ENCODE measurements at regions of chr1 and their contacts with region 1.

Region 1: DNA sequence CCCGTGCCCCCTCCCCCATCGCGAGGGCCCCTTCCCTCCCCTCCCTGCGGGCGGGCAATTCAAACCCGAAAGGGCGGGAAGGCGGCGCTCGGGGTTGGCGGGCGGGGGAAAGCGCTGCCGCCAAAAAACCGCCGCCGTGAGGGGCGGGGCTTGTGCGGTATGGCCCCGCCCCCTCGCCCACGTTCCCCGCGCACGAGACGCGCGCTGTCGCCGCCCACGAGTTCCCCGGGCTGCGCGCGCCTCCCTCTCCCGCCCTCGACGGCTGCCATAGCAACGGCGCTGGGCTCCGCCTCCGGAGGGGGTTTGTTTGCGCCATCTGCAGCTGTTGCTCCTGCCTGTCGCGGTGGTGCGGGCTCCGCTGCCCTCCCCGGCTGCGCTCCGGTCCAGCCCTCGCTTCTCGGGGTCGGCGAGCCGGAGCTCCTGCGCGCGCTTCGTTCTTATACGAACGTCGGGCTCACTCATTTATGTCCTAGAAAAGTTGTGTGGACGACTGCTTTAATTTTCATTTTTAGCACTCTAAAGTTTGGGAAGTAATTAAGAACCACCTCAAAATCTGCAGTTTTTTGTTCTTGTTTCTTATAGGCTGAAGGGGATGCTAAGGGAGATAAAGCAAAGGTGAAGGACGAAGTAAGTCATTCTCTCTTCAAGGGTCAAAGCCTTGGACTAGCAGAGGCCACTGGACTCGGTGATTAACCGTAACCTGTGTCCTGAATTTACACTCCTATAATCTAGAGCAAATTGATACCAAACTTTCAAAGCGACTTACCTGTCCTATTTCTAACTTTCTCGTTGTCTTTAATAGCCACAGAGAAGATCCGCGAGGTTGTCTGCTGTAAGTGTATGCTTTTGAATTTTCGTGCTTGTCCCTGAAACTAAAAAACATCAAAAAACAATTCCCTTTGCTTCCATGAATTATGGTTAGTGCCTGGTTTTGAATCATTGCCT is 933 bp downstream of the HMGN2 start:
- DNase-seq: peak; percentile 97
- H3K4me3 Mint-ChIP-seq: peak overlapping the region; percentile 89
- H3K27ac Mint-ChIP-seq: peak overlapping the region; percentile 74
- H3K4me1 Mint-ChIP-seq: peaks cover 50% of the 10 kb centered on the region
- H3K27me3 Mint-ChIP-seq: no peaks in the 10 kb centered on the region

Region 2: DNA sequence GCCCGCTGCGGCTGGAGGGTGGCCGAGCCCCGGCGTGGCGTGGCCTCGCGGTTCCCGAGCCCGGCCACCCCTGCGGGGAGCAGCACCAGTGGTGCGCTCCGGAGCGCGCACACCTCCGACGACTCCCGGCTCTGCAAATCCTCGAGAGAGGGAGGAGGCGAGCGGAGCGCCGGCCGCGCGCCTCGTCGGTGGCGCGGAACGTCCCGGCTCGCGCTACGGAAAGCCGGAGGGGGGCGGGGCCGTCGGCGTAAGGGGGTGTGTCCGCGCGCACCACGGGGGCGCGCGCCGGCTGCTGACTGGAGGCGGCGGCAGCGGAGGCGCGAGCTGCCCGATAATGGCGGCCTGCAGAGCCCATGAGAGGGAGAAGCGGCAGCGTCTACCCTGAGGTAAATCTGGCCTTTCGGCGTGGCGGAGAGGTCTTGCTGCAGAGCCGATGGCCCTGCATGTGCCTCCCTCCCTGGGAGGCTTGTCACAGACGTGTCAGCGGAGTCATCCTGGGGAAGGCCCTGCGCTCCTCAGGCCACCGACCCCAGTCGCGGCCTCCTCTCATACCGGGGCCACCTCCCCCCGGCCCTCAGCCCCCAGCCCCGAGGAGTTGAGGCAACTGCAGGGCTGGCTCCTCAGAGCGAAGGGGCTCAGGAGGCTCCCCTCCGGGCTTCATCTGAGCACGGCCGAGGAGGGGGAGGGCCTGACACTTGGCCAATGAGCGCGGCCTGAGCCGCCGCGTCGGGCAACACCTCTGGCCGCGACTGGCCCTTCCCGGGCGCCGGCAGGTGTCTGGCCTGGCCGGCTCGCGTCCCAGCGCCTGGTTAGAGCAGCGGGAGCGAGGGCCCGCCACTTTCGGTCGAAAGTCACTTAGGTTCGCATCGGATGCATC is 361.4 kb before region 1 on chr1 and contains the start of gene PDIK1L:
- CTCF ChIA-PET with region 1: no interaction called
- POLR2A ChIA-PET with region 1: no interaction called
- intact Hi-C with region 1: loop called (anchors 5 kb)
- DNase-seq: peak; percentile 96
- H3K4me3 Mint-ChIP-seq: peak within 1 kb of the TSS; percentile 97
- H3K27ac Mint-ChIP-seq: peak within 1 kb of the TSS; percentile 93
- H3K4me1 Mint-ChIP-seq: peaks cover 28% of the 10 kb centered on the region
- H3K27me3 Mint-ChIP-seq: no peaks in the 10 kb centered on the region
- total RNA-seq, gene PDIK1L: 14.9 to 15.2 TPM

Region 3: GRCh38 chr1:26284597-26285360 is 188.4 kb before region 1 on chr1:
- CTCF ChIA-PET with region 1: interaction called, 4 read pairs
- POLR2A ChIA-PET with region 1: interaction called, 3 read pairs
- intact Hi-C with region 1: loop called (anchors 2 kb)
- DNase-seq: peak; percentile 98
- H3K4me3 Mint-ChIP-seq: peak overlapping the region; percentile 68
- H3K27ac Mint-ChIP-seq: peak overlapping the region; percentile 98
- H3K4me1 Mint-ChIP-seq: peaks cover 90% of the 10 kb centered on the region
- H3K27me3 Mint-ChIP-seq: no peaks in the 10 kb centered on the region

Region 4: DNA sequence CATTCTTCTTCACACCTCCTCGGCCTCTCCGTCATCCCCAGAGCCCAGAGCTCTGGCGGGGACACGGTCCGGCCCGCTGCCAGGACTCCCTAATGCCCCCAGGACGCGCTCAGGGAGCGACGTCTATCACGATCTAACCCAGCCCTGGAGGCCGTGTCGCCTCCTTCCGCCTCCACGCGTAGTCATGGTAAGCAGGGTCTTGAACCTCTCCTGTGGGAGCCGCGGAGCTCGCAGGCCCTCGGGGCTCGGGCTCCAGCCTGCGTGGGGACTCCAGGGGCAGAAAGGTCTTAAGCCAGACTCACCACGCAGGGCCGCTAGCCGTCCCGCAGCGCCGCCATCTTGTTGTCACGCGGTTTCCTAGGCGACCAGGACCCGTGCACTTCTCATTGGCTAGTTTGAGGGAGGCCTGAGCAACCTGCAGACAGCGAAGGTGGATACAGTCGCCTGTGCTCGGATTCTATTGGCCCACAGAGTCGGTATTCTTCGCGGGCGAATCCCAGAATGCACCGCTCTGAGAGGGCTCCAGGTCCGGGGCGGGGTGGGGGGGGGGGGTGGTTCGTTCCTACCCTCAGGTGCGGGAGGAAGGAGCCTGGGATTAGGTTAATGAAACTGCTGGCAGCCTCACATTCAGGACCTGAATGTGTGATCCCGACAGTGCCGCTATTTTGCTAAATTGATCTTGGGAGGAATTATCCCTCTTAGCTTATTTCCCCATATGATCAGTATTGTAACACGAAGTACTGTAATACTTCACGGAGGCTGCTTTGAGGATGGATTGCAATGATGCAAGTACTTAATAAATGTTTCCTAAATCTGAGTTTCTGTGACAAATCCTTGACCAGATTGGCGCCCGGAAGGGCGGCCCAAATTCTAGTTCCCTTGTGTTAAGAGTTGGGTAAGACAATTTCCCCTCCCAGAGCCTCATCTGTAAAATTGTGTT is 166.6 kb before region 1 on chr1 and contains the start of gene UBXN11:
- CTCF ChIA-PET with region 1: no interaction called
- POLR2A ChIA-PET with region 1: no interaction called
- intact Hi-C with region 1: loop called (anchors 5 kb)
- DNase-seq: peak; percentile 97
- H3K4me3 Mint-ChIP-seq: peak within 1 kb of the TSS; percentile 95
- H3K27ac Mint-ChIP-seq: peak within 1 kb of the TSS; percentile 92
- H3K4me1 Mint-ChIP-seq: peaks cover 32% of the 10 kb centered on the region
- H3K27me3 Mint-ChIP-seq: no peaks in the 10 kb centered on the region
- total RNA-seq, gene UBXN11: 24.5 to 26.1 TPM

Region 5: DNA sequence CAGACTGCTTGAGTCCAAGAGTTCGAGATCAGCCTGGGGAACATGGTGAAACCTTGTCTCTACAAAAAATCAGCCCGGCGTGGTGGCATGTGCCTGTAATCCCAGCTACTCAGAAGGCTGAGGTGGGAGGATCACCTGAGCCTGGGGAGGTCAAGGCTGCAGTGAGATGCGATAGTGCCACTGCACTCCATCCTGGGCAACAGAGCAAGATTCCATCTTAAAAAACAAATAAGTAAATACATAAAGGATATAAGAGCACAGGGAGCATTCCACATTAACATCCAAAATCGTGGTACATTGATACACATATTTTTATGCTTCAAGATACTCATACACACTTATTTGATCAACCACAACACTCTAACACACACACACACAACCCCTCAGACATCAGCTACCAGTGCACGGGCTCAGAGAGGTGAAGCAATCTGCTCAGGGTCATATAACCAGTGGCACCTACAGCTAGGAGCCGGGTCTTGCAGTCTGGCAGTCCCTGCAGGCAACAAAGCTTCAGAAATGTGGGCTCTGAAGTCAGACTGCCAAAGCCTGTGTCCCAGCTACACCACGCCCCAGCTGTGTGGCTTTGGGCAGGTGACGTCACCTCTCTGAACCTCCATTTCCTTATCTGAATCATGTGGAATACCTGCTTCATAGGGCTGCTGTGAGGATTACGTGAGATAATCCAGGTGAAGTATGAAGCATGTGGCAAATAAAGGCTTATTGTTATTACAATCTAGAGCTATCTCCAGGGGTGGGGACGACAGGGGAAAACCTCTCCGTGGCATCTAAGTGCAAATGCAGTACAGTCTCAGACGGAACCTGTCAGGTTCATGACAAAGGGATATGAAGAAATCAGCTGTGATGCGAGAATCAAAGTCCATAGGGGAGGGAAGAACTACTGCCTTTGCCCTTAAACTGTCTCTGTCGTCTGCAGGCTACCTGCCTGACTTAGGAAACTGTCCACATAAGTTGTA is 114.5 kb before region 1 on chr1:
- CTCF ChIA-PET with region 1: no interaction called
- POLR2A ChIA-PET with region 1: no interaction called
- intact Hi-C with region 1: no loop called
- DNase-seq: peak; percentile 85
- H3K4me3 Mint-ChIP-seq: peak overlapping the region; percentile 6
- H3K27ac Mint-ChIP-seq: no peak overlapping the region
- H3K4me1 Mint-ChIP-seq: peaks cover 40% of the 10 kb centered on the region
- H3K27me3 Mint-ChIP-seq: peaks cover 7% of the 10 kb centered on the region

Region 6: DNA sequence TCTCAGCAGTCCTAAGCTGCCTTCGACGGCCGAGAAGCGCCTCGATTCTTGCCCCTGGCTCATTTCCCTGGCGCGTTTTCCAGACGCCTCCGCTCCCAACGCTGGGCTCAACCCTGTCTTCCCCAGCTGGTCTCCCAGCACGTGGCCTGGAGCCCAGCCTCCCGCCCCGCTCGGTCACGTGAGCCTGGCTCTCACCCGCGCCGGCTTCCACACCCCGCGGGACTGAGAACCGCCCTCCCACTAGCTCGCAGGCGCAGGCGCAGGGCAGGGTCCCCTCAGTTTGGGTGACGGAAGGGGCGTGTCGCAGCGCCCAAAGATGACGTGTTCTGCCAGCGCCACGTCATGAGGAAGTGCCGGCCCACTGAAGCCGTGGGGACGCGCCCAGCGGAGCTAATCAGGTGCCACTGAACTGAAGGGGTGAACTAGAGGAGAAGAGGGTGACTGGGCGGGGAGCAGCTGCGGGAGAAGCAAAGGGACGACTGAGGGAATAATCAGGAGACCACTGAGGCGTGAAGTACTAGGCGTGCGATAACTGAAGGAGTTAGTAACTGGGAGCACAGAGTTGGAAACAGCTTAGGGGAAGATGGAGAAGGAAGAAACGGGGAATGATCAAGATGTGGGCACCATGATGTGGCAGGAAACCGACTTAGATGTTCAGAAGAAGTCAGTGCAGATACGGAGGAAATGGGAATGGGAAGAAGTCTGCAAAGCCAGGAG is 41.0 kb before region 1 on chr1 and contains the start of gene DHDDS:
- CTCF ChIA-PET with region 1: interaction called, 15 read pairs
- POLR2A ChIA-PET with region 1: interaction called, 19 read pairs
- intact Hi-C with region 1: loop called (anchors 1 kb)
- DNase-seq: peak; percentile 99
- H3K4me3 Mint-ChIP-seq: peak within 1 kb of the TSS; percentile 91
- H3K27ac Mint-ChIP-seq: peak within 1 kb of the TSS; percentile 80
- H3K4me1 Mint-ChIP-seq: peaks cover 23% of the 10 kb centered on the region
- H3K27me3 Mint-ChIP-seq: no peaks in the 10 kb centered on the region
- total RNA-seq, gene DHDDS: 41.9 to 45.5 TPM

Region 7: GRCh38 chr1:26459573-26460031 is 13.6 kb before region 1 on chr1:
- CTCF ChIA-PET with region 1: interaction called, 11 read pairs
- POLR2A ChIA-PET with region 1: interaction called, 5 read pairs
- intact Hi-C with region 1: no loop called
- DNase-seq: no peak
- H3K4me3 Mint-ChIP-seq: no peak overlapping the region
- H3K27ac Mint-ChIP-seq: no peak overlapping the region
- H3K4me1 Mint-ChIP-seq: no peaks in the 10 kb centered on the region
- H3K27me3 Mint-ChIP-seq: no peaks in the 10 kb centered on the region

Region 8: DNA sequence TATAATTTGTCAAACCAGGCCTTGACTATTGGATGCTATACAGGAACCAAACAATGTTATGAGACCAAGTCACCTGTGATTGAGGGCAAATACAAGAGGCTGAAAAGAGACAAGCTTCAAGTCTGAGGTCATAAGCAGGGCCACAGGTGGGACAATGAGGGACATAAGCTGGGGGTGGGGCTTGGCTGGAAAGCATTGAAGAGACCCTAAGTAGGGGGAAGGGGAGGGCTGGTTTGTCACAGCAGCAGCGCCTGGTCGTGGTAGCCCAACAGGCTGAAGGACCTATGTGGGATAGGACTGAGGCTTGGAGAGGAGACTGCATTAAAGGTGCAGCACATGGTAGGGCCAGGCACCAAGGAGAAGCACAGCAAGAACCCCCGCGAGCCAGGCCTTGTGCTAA is 17.0 kb after region 1 on chr1:
- CTCF ChIA-PET with region 1: no interaction called
- POLR2A ChIA-PET with region 1: no interaction called
- intact Hi-C with region 1: no loop called
- DNase-seq: no peak
- H3K4me3 Mint-ChIP-seq: no peak overlapping the region
- H3K27ac Mint-ChIP-seq: no peak overlapping the region
- H3K4me1 Mint-ChIP-seq: no peaks in the 10 kb centered on the region
- H3K27me3 Mint-ChIP-seq: no peaks in the 10 kb centered on the region